ENCODE measurements at regions of chr11 and their contacts with region 1.

Region 1: DNA sequence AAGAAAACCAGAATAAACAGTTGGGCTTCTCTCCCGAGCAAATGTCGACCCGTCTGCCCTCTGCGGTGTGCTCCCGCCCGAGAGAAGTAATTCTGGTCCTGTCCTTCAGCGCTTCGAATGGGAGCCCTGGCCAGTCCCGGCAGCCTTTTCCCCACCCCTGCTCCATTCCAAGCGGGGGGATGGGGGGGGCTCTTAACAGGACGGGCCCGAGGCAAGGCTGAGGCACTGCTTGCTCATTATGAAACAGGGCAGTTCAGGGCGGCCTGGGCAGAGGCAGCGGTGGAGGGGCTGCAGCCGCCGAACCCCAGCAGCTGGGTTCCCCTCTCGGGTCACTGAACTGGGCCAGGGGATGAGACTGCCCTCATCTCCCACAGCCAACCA is 9.1 kb downstream of the BACE1-AS start:
- DNase-seq: peak; percentile 54
- ATAC-seq: peak; percentile 88
- H3K4me3 ChIP-seq: no peak overlapping the region
- H3K27ac ChIP-seq: no peak overlapping the region
- H3K4me1 ChIP-seq: peaks cover 13% of the 10 kb centered on the region; the same call in 1 of the 2 replicates
- H3K27me3 ChIP-seq: no peaks in the 10 kb centered on the region
- CTCF ChIP-seq: no peak
- POLR2A ChIP-seq: no peak
- RAD21 ChIP-seq: no peak

Region 2: GRCh38 chr11:117171404-117172061 is 128.7 kb before region 1 on chr11:
- CTCF ChIA-PET with region 1: no interaction called
- POLR2A ChIA-PET with region 1: no interaction called
- dilution Hi-C with region 1: no loop called
- in situ Hi-C with region 1: no loop called
- intact Hi-C with region 1: no loop called
- DNase-seq: peak; percentile 54
- ATAC-seq: peak; percentile 59
- H3K4me3 ChIP-seq: no peak overlapping the region
- H3K27ac ChIP-seq: no peak overlapping the region
- H3K4me1 ChIP-seq: peaks cover 14% of the 10 kb centered on the region
- H3K27me3 ChIP-seq: no peaks in the 10 kb centered on the region
- CTCF ChIP-seq: no peak
- POLR2A ChIP-seq: no peak
- RAD21 ChIP-seq: no peak

Region 3: GRCh38 chr11:117259417-117259816 is 40.9 kb before region 1 on chr11:
- CTCF ChIA-PET with region 1: interaction called, 10 read pairs
- POLR2A ChIA-PET with region 1: no interaction called
- dilution Hi-C with region 1: no loop called
- in situ Hi-C with region 1: no loop called
- intact Hi-C with region 1: no loop called
- DNase-seq: peak; percentile 79
- ATAC-seq: peak; percentile 83
- H3K4me3 ChIP-seq: no peak overlapping the region
- H3K27ac ChIP-seq: peak overlapping the region; percentile 33; the same call in 1 of the 2 replicates
- H3K4me1 ChIP-seq: peaks cover 2% of the 10 kb centered on the region; the same call in 1 of the 2 replicates
- H3K27me3 ChIP-seq: no peaks in the 10 kb centered on the region
- CTCF ChIP-seq: no peak
- POLR2A ChIP-seq: no peak
- RAD21 ChIP-seq: no peak

Measured in IMR-90 (cell line).